AG04450 (cell line): ENCODE measurements at regions of chr2 and their contacts with region 1.

Region 1: DNA sequence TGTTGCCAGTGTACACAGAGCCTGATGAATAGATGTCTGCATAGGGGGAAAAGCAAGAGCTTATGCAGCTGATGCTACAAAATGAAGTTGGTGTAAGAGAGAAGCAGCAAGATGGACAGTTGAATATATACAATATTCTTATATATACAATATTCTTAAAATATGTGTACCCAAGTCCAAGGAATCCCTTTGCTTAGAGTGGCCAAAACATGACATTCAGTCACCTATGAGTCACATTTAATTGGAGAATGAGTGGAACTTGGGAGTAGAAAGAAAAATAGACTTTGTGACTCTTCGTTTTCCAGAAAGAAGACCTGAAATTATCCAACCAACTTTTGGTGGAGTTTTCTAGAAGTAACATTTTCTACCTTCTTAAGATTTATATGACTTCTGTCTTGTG is 81.8 kb downstream of the SCN9A start:
- DNase-seq: no peak
- H3K4me3 ChIP-seq: no peak overlapping the region
- H3K27ac ChIP-seq: no peak overlapping the region
- H3K27me3 ChIP-seq: no peaks in the 10 kb centered on the region
- CTCF ChIP-seq: no peak

Region 2: GRCh38 chr2:166314022-166314759 is 20.2 kb after region 1 on chr2:
- CTCF ChIA-PET with region 1: no interaction called
- POLR2A ChIA-PET with region 1: no interaction called
- DNase-seq: peak; percentile 72
- H3K4me3 ChIP-seq: no peak overlapping the region
- H3K27ac ChIP-seq: peak overlapping the region; percentile 82
- H3K27me3 ChIP-seq: no peaks in the 10 kb centered on the region
- CTCF ChIP-seq: no peak

Region 3: DNA sequence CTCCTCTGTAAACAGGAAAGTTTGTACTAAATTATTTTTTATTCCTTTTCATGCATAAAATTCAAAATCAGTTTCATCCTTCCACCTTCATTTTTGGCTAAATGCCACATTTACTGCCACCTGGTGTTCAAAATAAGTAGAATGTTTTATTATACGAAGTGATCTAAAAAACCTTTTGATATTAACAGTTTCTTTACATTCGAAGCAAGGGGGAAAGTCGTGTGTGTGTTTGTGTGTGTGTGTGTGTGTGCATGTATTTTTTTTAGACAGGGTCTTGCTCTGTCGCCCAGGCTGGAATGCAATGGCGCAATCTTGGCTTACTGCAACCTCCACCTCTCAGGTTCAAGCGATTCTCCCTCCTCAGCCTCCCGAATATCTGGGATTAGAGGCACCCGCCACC is 90.8 kb after region 1 on chr2:
- CTCF ChIA-PET with region 1: interaction called, 10 read pairs
- POLR2A ChIA-PET with region 1: no interaction called
- DNase-seq: no peak
- H3K4me3 ChIP-seq: no peak overlapping the region
- H3K27ac ChIP-seq: no peak overlapping the region
- H3K27me3 ChIP-seq: no peaks in the 10 kb centered on the region
- CTCF ChIP-seq: peak; percentile 50